ENCODE measurements at regions of chr2 and their contacts with region 1.

Region 1: GRCh38 chr2:38665854-38666555 is at the start of gene GALM:
- DNase-seq: peak; percentile 85 to 86
- H3K4me3 ChIP-seq: peak within 1 kb of the TSS; percentile 67
- H3K27ac ChIP-seq: peak within 1 kb of the TSS; percentile 51
- H3K4me1 ChIP-seq: peaks cover 12% of the 10 kb centered on the region; the same call in 1 of the 2 replicates
- H3K27me3 ChIP-seq: no peaks in the 10 kb centered on the region
- CTCF ChIP-seq: no peak
- total RNA-seq, gene GALM: 26.3 and 27.7 TPM in 2 replicates

Region 2: GRCh38 chr2:37760471-37760870 is 905.5 kb before region 1 on chr2:
- CTCF ChIA-PET with region 1: no interaction called
- POLR2A ChIA-PET with region 1: no interaction called
- intact Hi-C with region 1: no loop called
- DNase-seq: no peak
- H3K4me3 ChIP-seq: no peak overlapping the region
- H3K27ac ChIP-seq: no peak overlapping the region
- H3K4me1 ChIP-seq: no peaks in the 10 kb centered on the region
- H3K27me3 ChIP-seq: no peaks in the 10 kb centered on the region
- CTCF ChIP-seq: no peak

Region 3: GRCh38 chr2:38251940-38252339 is 414.1 kb before region 1 on chr2:
- CTCF ChIA-PET with region 1: interaction called, 15 read pairs
- POLR2A ChIA-PET with region 1: no interaction called
- intact Hi-C with region 1: no loop called
- DNase-seq: no peak
- H3K4me3 ChIP-seq: no peak overlapping the region
- H3K27ac ChIP-seq: no peak overlapping the region
- H3K4me1 ChIP-seq: no peaks in the 10 kb centered on the region
- H3K27me3 ChIP-seq: no peaks in the 10 kb centered on the region
- CTCF ChIP-seq: no peak

Region 4: GRCh38 chr2:38685116-38685735 is 19.2 kb after region 1 on chr2:
- CTCF ChIA-PET with region 1: no interaction called
- POLR2A ChIA-PET with region 1: no interaction called
- intact Hi-C with region 1: no loop called
- DNase-seq: no peak
- H3K4me3 ChIP-seq: no peak overlapping the region
- H3K27ac ChIP-seq: no peak overlapping the region
- H3K4me1 ChIP-seq: peaks cover 22% of the 10 kb centered on the region
- H3K27me3 ChIP-seq: no peaks in the 10 kb centered on the region
- CTCF ChIP-seq: no peak

Measured in PC-9 (cell line).